Cardiac septum (tissue), 1 donor: ENCODE measurements at regions of chr10 and their contacts with region 1.

Region 1: DNA sequence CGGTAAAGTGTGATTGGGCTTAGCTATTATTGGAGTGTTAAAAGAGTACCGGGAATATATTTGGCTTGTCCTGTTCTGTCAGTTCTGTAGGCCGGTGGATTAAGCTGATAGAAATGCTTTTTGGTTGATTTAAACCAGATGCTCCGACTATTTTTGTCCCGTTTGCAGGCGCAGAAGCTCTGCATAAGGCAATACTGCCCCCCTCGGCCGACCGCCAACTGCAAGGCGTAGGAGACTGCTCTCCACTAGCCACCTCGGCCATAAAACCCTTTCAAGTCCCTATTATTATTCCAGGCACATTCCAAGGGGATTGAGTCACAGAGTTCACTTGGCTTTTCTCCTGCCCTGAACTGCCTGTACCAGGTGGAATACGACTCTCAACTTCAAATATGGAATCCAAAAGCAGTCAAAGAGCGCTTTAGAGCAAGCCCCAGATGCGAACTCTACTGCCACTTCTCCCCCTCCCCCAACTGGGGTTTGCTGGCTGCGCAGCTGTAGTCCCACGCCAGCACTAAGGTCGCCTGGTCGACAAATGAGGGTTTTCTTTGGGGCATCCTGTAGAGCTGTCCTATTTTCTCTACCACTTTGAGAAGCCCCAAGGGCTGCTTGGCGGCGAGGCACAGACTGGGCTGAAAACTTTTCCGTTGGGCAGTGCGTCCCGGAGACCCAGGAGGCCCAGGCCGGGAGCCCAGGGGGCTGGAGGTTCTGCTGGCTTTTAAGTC is 108.3 kb downstream of the REEP3 start:
- DNase-seq: peak; percentile 96

Region 2: DNA sequence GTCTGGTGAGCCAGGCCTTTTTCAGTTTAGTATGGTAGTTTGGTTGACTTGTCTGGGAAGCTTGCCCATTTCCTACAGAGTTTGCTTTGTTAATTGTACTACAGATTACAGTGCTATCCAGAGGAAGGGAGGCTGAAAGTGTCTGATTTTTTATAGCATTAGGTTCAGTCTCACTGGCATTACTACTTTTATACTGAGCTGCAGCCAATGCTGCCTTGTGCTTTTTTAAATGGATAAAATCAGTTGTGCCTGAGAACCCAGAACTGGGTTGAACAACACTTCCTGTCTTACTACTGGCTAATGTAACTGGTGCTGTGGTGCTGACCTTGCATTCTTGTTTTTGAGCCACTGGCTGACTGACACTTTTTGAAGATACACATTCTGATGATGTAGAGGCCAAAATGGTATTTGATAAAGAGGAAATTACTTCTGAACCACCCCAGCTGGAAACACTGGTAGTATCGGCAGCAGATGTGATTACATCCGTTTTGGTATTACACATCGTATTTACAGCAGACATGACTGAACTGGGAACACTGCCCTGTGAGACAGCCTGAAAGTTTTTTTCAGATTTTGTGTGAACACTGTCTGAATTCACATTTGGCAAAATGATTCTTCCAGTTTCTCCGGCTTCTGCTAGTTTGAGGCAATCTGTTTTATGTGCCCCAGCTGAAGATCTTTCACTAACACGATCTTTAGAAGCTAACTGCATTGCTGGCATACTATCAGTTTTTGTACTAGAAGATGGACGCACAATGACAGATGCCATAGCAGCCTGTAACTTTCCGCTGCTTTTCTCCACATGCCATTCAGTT is 422.3 kb before region 1 on chr10:
- intact Hi-C with region 1: loop called (anchors 2 kb)
- DNase-seq: no peak

Region 3: DNA sequence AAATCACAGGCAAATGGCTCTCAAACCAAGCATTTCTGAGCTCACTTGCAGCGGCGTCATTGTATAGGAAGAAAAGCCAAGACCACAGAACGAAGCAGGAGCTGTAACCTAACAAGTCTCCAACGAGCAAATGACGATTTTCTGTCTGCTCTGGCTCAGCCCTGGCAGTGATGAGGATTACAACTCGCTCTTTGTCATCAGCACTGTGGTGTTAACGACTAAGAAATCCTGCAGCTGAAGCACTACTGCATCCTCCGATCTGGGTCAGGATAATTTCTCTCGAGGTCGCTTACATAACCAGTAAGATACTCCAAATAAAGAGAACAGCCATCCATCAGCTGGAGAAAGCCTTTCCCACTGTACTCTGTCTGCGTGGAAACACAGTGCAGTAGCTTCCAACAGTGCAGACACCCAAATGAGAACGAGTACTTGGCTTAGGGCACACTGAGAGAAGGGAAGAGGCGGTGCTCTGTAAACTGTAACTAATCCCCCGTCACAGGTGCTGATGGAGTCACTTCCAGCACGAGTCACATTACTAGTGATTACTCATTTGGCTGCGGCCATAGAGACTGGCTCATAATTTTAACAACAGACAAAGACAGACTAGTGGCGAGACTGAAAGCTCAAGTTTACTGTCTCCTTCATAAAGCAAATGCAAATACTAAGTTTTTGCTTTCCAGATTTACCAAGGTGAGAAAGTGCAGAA is 360.6 kb before region 1 on chr10:
- intact Hi-C with region 1: loop called (anchors 2 kb)
- DNase-seq: peak; percentile 91

Region 4: DNA sequence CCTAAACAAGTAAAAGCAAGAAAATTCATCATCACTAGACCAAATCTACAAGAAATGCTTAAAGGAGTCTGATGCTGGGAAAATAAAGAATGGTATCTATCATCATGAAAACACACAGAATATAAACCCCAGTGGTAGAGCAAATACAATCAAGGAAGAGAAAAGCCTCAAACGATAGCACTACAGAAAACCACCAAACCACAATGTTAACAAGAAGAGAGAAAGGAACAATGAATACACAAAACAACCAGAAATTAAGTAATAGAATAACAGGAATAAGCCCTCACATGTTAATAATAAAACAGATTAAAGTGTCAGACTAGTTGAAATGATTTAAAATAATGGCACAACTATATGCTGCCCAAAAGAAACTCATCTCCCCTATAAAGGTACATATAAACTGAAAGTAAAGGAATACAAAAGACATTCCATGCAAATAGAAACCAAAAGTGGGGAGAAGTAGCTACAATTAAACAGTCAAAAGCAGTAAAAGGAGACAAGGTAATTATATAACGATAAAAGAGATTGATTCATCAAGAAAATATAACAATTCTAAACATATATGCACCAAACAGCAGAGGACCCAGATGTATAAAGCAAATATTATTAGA is 241.0 kb before region 1 on chr10:
- intact Hi-C with region 1: no loop called
- DNase-seq: no peak

Region 5: DNA sequence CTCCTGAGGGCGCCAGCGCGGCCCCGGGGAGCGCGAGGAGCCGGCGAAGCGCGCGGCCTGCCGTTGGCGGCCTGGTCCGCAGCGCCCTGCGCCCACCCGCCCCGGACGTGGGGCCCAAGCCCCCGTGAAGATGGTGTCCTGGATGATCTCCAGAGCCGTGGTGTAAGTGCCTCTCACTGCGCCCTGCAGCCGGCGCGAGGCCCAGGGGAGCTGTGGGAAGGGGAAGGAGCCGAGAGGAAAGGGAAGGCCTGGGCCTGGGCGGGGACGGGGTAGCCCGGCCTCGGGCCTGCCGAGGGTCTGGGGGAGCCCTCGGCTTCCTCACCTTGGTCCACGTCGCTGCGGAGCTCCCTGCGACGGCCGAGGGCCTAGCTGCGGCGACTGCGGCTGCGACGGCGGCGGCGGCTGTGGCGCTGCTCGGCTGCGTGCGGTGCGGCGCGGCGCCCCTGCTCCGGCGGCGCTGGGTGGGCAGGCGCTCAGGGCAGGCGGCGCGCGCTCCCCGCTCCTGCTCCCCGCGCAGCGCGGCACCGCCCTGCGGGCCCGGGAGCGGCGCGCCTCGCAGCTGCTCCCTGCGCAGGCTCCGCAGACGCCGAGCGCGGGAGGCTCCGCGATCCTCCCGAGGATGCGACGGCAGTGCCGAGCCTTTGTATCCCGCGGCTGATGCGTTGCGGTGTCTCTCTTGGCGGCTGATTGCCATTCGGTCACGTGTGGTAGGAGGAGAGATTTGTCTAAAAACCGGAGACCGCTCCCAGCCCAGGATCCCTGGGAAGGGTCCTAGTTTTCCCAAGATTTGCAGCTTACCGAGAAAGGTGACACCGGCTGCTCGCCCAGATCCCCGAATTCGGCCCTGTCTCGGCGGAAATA is 107.9 kb before region 1 on chr10:
- intact Hi-C with region 1: loop called (anchors 2 kb)
- DNase-seq: peak; percentile 90

Region 6: DNA sequence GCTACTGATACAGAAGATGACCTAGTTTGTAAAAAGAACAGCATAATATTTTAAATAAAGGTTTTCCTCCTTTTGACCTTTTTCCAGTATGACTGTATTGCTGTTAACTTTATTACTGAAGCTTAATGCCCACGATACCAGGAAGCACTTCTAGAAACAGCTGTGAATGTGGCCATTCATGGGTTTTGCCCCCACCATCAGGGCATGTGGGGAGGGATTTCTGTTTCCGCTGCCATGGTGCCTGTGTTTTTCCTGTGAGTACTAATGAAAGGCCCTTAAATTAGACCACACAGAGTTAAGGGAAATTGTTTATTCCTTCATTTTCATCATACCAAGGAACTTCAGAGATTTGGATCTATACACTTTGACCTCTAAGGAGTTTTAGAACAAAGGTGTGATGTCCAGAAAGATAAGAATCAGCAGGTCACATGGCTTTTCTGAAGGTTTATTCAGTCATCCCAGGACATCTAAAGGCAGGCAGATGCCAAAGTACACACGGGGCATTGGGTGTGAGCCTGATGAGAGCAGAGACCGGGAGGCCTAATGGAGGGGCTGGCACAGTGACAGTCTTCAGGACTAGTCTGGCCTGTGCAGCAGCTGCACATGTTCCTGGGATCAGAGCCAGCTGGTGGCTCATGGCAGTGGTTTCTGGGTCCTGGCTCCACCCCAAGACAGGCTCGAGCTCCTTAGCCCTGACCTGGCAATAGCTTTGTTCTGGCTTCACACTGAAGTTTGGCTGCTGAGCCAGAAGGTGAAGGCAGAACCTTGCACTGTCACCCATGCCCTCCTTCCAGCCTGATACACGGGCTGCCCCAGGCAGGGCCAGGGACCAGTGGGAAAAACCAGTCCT is 82.6 kb after region 1 on chr10:
- intact Hi-C with region 1: loop called (anchors 1 kb)
- DNase-seq: peak; percentile 94